ENCODE measurements at regions of chr6 and their contacts with region 1.

Region 1: DNA sequence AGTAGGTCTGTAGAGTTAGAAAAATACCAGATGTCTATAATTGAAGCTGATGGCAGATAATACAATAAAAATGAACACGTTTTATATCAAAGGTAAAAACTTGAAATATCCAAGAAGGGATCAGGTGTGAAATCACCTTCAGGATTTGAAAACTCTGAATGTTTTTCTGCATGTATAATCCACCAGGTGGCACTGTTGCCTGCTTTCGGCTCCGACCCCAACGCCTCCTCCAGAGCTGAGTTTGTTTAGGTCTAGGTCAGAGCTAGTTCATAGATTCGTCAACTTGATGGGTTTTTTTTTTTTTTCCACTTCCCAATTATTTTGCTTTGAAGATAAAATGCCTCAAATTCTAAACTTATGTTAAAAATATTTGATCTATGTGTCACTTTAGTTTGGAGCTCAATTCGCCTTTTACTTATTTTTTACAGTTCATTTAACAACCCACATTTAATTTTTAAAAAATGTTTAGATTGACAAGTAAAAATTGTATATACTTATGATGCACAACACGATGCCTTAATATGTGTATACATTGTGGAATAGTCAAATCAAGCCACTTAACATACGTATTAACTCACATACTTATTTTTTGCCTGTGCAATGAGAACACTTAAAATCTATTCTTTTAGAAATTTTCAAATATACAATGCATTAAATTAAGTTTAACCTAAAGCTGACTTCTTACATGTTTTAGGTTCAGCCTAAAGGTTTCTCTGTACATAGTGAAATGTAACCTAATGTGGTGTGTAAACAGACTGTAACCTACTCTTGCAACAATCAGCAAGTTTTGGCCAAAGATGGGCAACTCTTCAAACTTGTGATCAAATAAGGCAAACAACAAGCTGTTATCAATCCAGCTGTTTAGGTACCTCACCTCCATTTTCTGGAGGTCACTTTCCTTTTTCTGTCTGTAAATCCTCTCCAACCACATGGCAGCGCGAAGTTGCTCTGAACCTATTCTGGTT is 39.4 kb upstream of the ENPP4 start:
- DNase-seq: peak; percentile 41
- ATAC-seq: peak; percentile 78
- H3K4me3 ChIP-seq: no peak overlapping the region
- H3K27ac ChIP-seq: no peak overlapping the region
- H3K4me1 ChIP-seq: no peaks in the 10 kb centered on the region
- H3K27me3 ChIP-seq: peaks cover 4% of the 10 kb centered on the region
- CTCF ChIP-seq: peak; percentile 52 to 79 (median 79); a peak in 5 of 6 replicates
- POLR2A ChIP-seq: no peak
- RAD21 ChIP-seq: peak; percentile 88

Region 2: GRCh38 chr6:46105568-46105967 is 15.2 kb after region 1 on chr6:
- CTCF ChIA-PET with region 1: interaction called, 11 read pairs
- POLR2A ChIA-PET with region 1: interaction called, 3 read pairs
- RAD21 ChIA-PET with region 1: no interaction called
- intact Hi-C with region 1: no loop called
- DNase-seq: no peak
- ATAC-seq: peak; percentile 72
- H3K4me3 ChIP-seq: no peak overlapping the region
- H3K27ac ChIP-seq: peak overlapping the region; percentile 12; the same call in 1 of the 2 replicates
- H3K4me1 ChIP-seq: peaks cover 9 to 14% of the 10 kb centered on the region in 2 experiments; a peak in 3 of 4 replicates
- H3K27me3 ChIP-seq: no peaks in the 10 kb centered on the region
- CTCF ChIP-seq: no peak
- POLR2A ChIP-seq: no peak
- RAD21 ChIP-seq: 0 out of 2 replicates have a peak, but pooled peaks have one; percentile 7

Region 3: DNA sequence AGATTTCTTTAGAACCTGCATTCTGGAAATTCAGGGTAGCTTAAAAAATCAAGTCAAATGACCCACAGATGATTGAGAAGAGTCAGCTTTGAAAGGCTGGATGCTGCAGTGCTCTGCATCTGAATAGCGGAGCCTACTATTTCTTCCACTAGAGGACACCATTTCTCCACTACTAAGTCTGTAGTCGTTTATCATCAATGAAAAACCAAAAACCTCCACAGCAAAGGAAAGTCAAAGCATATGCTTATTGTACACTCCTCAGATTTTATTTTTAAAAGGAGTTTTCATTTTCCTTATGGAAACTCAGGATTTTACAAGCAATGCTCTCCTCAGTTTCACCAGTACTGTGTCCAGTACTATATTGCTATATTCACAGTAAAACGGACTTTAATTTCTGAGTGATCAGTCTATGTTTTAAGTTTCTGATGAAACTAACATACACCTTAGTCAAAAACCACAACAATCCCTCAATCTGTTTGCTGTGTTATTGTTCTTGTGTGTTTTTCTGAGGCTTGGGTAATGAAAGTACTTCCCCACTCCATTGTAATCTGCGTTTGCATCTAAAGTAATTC is 130.9 kb after region 1 on chr6:
- CTCF ChIA-PET with region 1: interaction called, 10 read pairs
- POLR2A ChIA-PET with region 1: no interaction called
- RAD21 ChIA-PET with region 1: interaction called in 1 of 2 experiments, 7 read pairs
- intact Hi-C with region 1: loop called (anchors 2 kb)
- DNase-seq: peak; percentile 18
- ATAC-seq: peak; percentile 83
- H3K4me3 ChIP-seq: no peak overlapping the region
- H3K27ac ChIP-seq: no peak overlapping the region
- H3K4me1 ChIP-seq: no peaks in the 10 kb centered on the region
- H3K27me3 ChIP-seq: 0 out of 2 replicates have a peak, but pooled peaks cover 4% of the 10 kb centered on the region
- CTCF ChIP-seq: peak; percentile 66 to 87 (median 74)
- POLR2A ChIP-seq: no peak
- RAD21 ChIP-seq: peak; percentile 85

Region 4: GRCh38 chr6:46626228-46626909 is 536.0 kb after region 1 on chr6:
- CTCF ChIA-PET with region 1: interaction called, 3 read pairs
- POLR2A ChIA-PET with region 1: no interaction called
- RAD21 ChIA-PET with region 1: no interaction called
- intact Hi-C with region 1: loop called (anchors 5 kb)
- DNase-seq: peak; percentile 22
- ATAC-seq: peak; percentile 74; the same call in 1 of the 2 replicates
- H3K4me3 ChIP-seq: no peak overlapping the region
- H3K27ac ChIP-seq: no peak overlapping the region
- H3K4me1 ChIP-seq: no peaks in the 10 kb centered on the region
- H3K27me3 ChIP-seq: no peaks in the 10 kb centered on the region
- CTCF ChIP-seq: peak; percentile 42 to 67 (median 66); a peak in 5 of 6 replicates
- POLR2A ChIP-seq: no peak
- RAD21 ChIP-seq: peak; percentile 74